ENCODE measurements at regions of chr1 and their contacts with region 1.

Region 1: DNA sequence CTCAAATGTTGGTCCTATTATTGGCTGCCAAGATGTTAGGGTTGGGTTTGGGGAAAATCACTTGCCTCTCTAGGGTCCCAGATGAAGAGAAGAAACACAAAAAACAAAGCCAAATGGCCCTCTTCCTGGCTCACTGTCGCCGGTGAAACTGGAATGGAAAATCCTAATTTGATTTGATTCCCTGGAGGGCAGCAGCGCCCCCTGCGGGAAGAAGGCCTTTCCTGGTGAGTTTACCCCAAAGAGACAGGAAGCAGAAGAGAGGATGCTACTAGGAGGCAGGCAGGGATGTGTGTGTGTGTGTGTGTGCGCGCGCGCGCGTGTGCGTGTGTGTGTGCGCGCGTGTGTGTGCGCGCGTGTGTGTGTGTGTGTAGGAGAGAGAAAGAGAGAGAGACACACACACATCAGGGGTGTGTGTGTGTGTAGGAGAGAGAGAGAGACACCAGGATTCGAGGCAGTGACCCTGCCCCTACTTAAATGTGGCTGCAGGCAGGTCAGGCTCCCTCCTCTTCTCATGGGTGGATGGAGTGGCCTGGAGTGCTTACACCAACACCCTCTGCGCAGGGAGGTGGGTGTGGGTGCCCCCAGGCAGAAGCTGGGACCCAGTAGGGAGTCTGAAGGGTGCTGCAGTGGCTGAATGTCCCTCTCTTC is 3.1 kb upstream of the SELENON start:
- DNase-seq: peak; percentile 87 to 92
- ATAC-seq: peak; percentile 35 to 62 (median 44)
- H3K4me3 ChIP-seq: peak overlapping the region; percentile 55
- H3K27ac ChIP-seq: peak overlapping the region; percentile 84
- H3K4me1 ChIP-seq: peaks cover 55% of the 10 kb centered on the region
- H3K27me3 ChIP-seq: no peaks in the 10 kb centered on the region
- CTCF ChIP-seq: peak; percentile 75

Region 2: GRCh38 chr1:25239681-25240541 is 557.0 kb before region 1 on chr1:
- intact Hi-C with region 1: loop called in 1 of 2 experiments (anchors 10 kb)
- DNase-seq: peak; percentile 93 to 97
- ATAC-seq: peak; percentile 92 to 93 (median 92)
- H3K4me3 ChIP-seq: peak overlapping the region; percentile 70
- H3K27ac ChIP-seq: peak overlapping the region; percentile 95
- H3K4me1 ChIP-seq: peaks cover 71% of the 10 kb centered on the region
- H3K27me3 ChIP-seq: no peaks in the 10 kb centered on the region
- CTCF ChIP-seq: peak; percentile 69

Region 3: DNA sequence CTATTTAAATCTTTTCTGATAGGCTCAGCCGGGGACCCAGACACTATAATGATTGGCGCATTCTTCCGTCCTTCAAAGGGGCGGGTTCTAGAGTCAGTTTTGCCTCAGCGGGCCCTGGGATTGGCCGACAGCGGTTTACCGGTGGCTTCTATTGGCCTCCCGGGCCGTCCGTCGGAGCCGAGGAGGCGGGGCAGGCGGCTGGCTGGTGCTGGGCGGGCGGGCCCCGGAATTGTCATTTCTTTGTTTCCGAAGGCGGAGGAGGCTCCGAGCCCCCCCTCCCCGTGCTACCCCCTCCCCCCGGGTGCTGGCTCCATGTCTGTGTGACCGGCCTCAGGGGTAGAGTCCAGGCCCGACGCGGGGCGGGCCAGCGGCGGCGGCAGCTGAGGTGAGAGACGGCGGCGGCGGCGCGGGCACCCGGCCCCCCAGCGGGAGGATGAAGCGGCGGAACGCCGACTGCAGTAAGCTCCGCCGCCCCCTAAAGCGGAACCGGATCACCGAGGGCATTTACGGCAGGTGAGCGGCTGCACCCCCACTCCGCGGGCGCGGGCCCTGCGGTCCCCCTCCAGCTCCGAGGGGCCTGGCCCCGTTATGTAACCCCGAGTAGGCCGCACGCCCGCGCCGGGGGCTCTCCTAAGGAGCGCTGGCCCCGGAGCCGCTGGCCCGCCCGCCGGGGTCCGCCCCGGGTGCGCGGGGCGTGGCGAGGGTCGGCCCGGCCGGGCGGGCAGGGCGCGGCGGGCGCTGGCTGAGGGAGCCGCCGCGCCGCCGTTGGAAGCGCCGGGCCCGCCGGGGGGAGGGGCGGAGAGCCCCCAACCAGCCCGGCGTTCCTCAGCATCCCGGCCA is 366.0 kb before region 1 on chr1 and contains the start of gene MACO1:
- intact Hi-C with region 1: loop called (anchors 5 to 10 kb)
- DNase-seq: peak; percentile 97 to 98
- ATAC-seq: peak; percentile 93 to 94 (median 93)
- H3K4me3 ChIP-seq: peak within 1 kb of the TSS; percentile 94
- H3K27ac ChIP-seq: peak within 1 kb of the TSS; percentile 95
- H3K4me1 ChIP-seq: peaks cover 38% of the 10 kb centered on the region
- H3K27me3 ChIP-seq: no peaks in the 10 kb centered on the region
- CTCF ChIP-seq: no peak
- total RNA-seq, gene MACO1: 22.7 to 49.7 (median 30.8) TPM

Region 4: DNA sequence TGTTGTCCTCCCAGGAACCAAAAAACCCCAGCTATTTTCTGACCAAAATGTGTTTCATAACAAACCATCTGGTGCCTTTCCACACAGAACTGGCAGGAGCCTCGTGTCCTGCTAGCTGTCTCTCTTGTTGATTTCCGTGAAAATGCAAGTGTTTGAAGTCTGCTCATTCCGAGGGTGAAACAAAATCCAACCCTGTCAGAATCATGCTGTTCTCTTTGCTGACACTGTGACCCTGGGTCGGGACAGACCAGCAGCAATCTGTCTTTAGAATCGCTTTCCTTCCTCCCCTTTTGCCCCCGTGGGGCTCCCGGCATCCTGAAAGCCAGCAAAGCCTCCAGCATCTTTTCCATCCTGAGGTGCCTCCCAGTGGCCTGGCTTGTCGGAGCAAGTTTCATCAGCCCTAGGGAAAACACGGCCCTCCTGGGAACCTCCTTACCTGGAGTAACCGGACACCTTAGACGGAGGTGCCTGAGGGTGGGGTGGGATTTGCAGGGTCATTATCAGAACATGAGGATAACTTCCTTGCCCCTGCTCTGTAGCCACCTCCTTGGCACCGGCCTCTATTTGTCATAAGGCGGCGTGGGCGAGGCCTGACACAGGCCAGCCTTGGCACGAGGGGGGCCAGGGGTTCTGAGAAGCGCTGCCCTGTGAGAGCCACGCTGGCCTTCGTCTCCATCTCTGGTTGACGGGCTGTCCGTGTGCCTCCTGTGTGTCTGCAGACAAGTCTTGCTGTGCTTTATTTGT is 228.7 kb before region 1 on chr1:
- intact Hi-C with region 1: loop called in 1 of 2 experiments (anchors 5 kb)
- DNase-seq: peak; percentile 66 to 83
- ATAC-seq: peak in 1 of 4 donors; percentile 6
- H3K4me3 ChIP-seq: no peak overlapping the region
- H3K27ac ChIP-seq: peak overlapping the region; percentile 89
- H3K4me1 ChIP-seq: peaks cover 53% of the 10 kb centered on the region
- H3K27me3 ChIP-seq: no peaks in the 10 kb centered on the region
- CTCF ChIP-seq: no peak

Region 5: DNA sequence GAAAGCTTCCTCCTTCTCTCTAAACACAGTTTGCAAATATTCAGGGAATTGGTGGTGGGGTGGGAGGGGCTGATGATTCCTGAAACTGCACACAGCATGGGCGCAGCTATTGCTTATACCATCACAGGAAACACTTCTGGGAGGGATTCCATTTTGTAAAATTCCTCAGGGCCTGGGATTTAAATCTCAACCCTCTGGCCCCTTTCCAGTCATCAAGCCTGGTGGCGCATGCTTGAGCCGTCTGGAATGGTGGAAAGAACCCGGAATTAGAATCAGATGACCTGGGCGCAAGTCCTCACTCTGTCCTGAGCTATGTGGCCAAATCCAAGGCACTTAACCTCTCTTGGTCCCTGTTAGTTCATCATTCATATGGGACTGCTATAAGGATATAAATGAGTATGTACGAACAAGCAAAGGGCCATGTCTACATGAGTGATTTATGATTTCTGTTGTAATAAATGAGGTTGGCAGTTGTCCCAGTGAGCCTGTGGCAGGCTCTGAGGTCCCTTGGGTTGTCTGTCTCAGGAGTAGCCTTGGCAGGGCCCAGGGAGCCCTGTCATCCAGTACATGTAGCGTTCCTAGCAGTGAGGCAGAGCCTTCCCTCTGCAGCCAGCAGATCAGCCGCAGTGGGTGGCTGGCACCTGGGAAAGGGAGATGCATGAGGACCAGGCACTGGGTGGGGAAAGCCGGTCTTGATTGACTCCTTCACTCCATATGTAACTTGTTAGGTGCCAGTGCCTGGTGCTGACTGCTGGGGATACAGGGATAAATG is 108.4 kb before region 1 on chr1:
- intact Hi-C with region 1: loop called in 1 of 2 experiments (anchors 5 kb)
- DNase-seq: peak; percentile 54 to 84
- ATAC-seq: peak; percentile 85 to 94 (median 89)
- H3K4me3 ChIP-seq: no peak overlapping the region
- H3K27ac ChIP-seq: peak overlapping the region; percentile 51
- H3K4me1 ChIP-seq: peaks cover 39% of the 10 kb centered on the region
- H3K27me3 ChIP-seq: no peaks in the 10 kb centered on the region
- CTCF ChIP-seq: no peak

Region 6: DNA sequence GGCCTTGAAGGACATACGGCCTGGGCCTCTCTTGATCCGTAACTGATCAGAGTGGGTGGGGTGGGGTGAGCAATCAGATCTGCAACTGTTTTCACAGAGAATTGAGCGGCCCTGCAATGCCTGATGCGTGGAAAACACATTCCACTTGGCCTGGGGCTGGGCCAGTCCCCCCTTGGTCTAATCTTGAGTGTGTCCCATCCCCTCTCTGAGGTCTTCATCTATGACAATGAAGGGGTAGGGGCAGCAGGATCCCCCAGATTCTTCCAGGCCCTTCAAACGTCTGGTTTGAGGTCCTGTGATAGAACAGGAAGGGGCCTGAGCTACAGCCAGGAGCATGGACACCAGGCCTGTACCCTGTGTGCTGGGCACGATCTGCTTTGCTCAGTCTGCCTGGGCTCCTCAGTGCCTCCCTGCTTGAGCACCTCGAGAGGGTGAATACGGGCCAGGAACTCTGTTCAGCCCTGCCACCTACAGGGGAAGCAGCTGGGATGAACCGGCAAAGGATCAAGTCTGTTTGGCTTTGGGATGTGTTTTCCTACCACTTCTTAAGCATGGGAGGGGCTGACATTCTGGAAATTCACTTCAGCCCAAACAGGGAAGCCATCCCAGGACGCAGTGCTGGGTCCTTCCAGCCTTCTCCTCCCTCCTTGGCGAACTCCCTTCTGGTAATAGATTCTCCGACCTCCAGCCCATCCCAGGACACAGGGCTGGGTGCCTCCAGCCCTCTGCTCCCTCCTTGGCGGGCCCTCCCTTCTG is 52.9 kb before region 1 on chr1:
- intact Hi-C with region 1: loop called (anchors 1 to 5 kb)
- DNase-seq: peak; percentile 71 to 83
- ATAC-seq: peak; percentile 83 to 87 (median 86)
- H3K4me3 ChIP-seq: peak overlapping the region; percentile 24
- H3K27ac ChIP-seq: peak overlapping the region; percentile 93
- H3K4me1 ChIP-seq: peaks cover 22% of the 10 kb centered on the region
- H3K27me3 ChIP-seq: no peaks in the 10 kb centered on the region
- CTCF ChIP-seq: peak; percentile 50

Region 7: DNA sequence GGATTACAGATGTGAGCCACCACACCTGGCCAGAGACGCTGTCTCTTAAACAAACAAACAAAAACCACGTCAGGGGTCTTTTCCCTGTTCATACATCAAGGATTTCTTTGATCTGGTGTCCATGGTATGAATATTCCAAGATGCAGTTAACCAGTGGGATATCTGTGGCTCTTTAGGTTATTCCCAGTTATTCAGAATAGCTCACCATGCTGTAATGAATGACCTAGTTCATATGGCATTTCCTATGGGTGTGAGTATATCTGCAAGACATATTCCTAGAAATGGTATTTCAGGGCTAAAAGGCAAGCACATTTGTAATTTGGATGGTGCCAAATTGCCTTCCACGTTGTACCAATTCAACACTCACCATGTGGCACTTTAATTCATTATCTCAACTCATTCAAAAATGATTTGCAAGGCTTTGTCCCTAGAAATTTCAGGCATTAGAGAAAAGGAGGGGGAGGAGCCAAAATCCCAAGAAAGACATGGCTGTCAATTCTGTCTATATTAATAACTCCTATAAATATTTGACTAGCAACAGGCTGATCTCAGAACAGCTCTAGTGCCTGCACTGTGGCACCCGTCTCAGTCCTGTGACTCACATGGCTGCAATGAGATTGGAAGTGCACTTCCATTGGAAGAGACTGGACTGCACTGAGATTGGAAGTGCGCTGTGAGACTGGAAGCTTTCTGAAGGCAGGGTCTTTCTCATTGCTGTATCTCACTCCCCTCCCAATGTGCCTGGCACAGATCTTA is 115.3 kb after region 1 on chr1:
- intact Hi-C with region 1: no loop called
- DNase-seq: no peak
- ATAC-seq: no peak
- H3K4me3 ChIP-seq: no peak overlapping the region
- H3K27ac ChIP-seq: no peak overlapping the region
- H3K4me1 ChIP-seq: no peaks in the 10 kb centered on the region
- H3K27me3 ChIP-seq: no peaks in the 10 kb centered on the region
- CTCF ChIP-seq: no peak

Measured in psoas muscle (tissue), 8 donors.